ENCODE measurements at regions of chr10 and their contacts with region 1.

Region 1: DNA sequence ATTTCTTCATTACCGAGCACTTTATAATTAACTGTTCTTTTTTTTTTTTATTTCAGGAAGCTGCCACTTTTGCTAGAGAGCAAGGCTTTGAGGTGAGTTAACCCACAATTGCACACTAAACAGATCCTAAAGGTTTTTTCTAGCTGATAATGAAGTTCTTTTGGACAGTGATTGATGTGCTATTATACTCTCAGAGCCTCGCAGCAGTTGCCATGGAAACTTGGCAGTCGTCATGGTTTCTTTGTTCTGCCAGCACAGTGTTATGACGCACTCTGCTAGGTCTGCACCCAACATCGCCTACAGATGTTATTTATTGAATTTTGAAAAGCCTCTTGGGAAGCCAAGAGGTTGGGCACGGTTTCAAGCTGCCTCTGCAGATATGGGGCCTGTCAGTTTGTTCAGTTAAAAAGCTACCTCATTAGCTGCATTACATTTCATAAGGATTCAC is 237.2 kb upstream of the KAT6B start:
- DNase-seq: peak; percentile 82
- ATAC-seq: peak; percentile 75
- H3K4me3 ChIP-seq: no peak overlapping the region
- H3K27ac ChIP-seq: no peak overlapping the region
- H3K4me1 ChIP-seq: peaks cover 23% of the 10 kb centered on the region
- H3K27me3 ChIP-seq: no peaks in the 10 kb centered on the region
- CTCF ChIP-seq: no peak
- EP300 ChIP-seq: peak; percentile 80 to 92
- POLR2A ChIP-seq: no peak
- RAD21 ChIP-seq: no peak

Region 2: GRCh38 chr10:74437822-74438221 is 151.4 kb before region 1 on chr10:
- CTCF ChIA-PET with region 1: no interaction called
- POLR2A ChIA-PET with region 1: no interaction called
- RAD21 ChIA-PET with region 1: no interaction called
- SMC1A ChIA-PET with region 1: no interaction called
- in situ Hi-C with region 1: no loop called
- intact Hi-C with region 1: no loop called
- DNase-seq: no peak
- ATAC-seq: no peak
- H3K4me3 ChIP-seq: no peak overlapping the region
- H3K27ac ChIP-seq: no peak overlapping the region
- H3K4me1 ChIP-seq: no peaks in the 10 kb centered on the region
- H3K27me3 ChIP-seq: no peaks in the 10 kb centered on the region
- CTCF ChIP-seq: no peak
- EP300 ChIP-seq: no peak
- POLR2A ChIP-seq: no peak
- RAD21 ChIP-seq: no peak

Region 3: DNA sequence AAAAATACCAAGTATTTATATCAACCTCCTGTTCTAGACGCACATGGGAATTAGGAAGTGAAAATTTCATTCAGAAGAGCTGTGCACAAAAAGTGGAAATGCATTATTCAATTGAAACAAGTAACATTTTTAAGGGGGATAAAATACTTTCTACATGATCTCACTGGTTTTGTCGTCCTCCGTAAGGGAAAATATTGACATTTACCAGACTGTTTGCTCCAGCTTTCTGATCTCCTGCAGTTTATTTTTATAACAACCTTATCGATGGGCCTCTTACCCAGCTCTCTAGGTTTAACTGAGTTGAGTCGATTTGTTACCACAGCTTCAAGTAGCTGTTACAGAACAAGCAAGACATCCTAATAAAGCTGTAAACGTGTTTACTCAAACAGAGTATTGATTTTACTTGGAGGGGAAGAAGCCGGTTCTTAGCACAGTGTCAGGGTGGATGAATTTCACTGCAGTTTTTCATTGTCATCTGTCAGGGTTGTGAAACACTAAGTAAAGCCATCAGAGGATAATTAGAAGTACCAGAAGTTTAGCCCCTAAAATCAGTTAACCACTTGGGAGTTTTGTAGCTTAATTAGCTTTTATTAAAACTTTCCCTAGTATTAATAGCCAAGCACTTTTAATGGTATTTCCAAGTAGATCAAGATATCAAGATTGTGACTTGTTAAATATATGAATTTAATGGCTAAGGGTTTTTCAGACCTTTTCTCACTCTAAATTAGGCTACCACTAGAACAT is 94.5 kb after region 1 on chr10:
- CTCF ChIA-PET with region 1: interaction called, 6 read pairs
- POLR2A ChIA-PET with region 1: interaction called, 14 read pairs
- RAD21 ChIA-PET with region 1: interaction called, 53 read pairs
- SMC1A ChIA-PET with region 1: interaction called, 58 read pairs
- in situ Hi-C with region 1: no loop called
- intact Hi-C with region 1: loop called (anchors 5 kb)
- DNase-seq: no peak
- ATAC-seq: peak; percentile 72
- H3K4me3 ChIP-seq: no peak overlapping the region; the same call in 1 of the 2 replicates
- H3K27ac ChIP-seq: peak overlapping the region; percentile 83
- H3K4me1 ChIP-seq: peaks cover 23% of the 10 kb centered on the region
- H3K27me3 ChIP-seq: no peaks in the 10 kb centered on the region
- CTCF ChIP-seq: no peak
- EP300 ChIP-seq: 0 out of 4 replicates have a peak, but pooled peaks of 1 of the 2 experiments have one; percentile 41
- POLR2A ChIP-seq: no peak
- RAD21 ChIP-seq: no peak

Region 4: DNA sequence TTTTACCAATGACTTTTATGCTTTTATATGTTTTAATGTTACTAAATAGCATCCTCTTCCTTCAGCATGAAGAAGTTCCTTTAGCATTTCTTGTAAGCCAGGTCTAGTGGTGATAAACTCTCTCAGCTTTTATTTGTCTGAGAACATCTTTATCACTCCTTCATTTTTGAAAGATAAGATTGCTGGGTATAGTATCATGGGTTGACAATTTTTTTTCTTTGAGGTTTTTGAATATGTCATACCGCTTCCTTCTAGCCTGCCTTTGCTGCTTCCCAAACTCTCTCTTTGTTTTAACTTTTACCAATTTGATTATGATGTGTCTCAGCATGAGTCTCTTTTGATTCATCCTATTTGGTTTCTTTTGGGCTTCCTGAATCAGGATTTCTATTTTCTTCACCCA is 129.0 kb after region 1 on chr10:
- CTCF ChIA-PET with region 1: no interaction called
- POLR2A ChIA-PET with region 1: no interaction called
- RAD21 ChIA-PET with region 1: no interaction called
- SMC1A ChIA-PET with region 1: no interaction called
- in situ Hi-C with region 1: no loop called
- intact Hi-C with region 1: no loop called
- DNase-seq: no peak
- ATAC-seq: no peak
- H3K4me3 ChIP-seq: no peak overlapping the region
- H3K27ac ChIP-seq: no peak overlapping the region
- H3K4me1 ChIP-seq: no peaks in the 10 kb centered on the region
- H3K27me3 ChIP-seq: no peaks in the 10 kb centered on the region
- CTCF ChIP-seq: no peak
- EP300 ChIP-seq: no peak
- POLR2A ChIP-seq: no peak
- RAD21 ChIP-seq: no peak

Region 5: GRCh38 chr10:74924251-74924951 is 335.2 kb after region 1 on chr10:
- CTCF ChIA-PET with region 1: no interaction called
- POLR2A ChIA-PET with region 1: no interaction called
- RAD21 ChIA-PET with region 1: no interaction called
- SMC1A ChIA-PET with region 1: no interaction called
- in situ Hi-C with region 1: no loop called
- intact Hi-C with region 1: no loop called
- DNase-seq: no peak
- ATAC-seq: no peak
- H3K4me3 ChIP-seq: no peak overlapping the region
- H3K27ac ChIP-seq: no peak overlapping the region; the same call in 1 of the 2 replicates
- H3K4me1 ChIP-seq: no peaks in the 10 kb centered on the region
- H3K27me3 ChIP-seq: no peaks in the 10 kb centered on the region
- CTCF ChIP-seq: no peak
- EP300 ChIP-seq: no peak
- POLR2A ChIP-seq: no peak
- RAD21 ChIP-seq: no peak

Region 6: GRCh38 chr10:75202321-75203045 is 613.2 kb after region 1 on chr10:
- CTCF ChIA-PET with region 1: no interaction called
- POLR2A ChIA-PET with region 1: no interaction called
- RAD21 ChIA-PET with region 1: no interaction called
- SMC1A ChIA-PET with region 1: no interaction called
- in situ Hi-C with region 1: no loop called
- intact Hi-C with region 1: no loop called
- DNase-seq: no peak
- ATAC-seq: no peak
- H3K4me3 ChIP-seq: no peak overlapping the region
- H3K27ac ChIP-seq: no peak overlapping the region
- H3K4me1 ChIP-seq: no peaks in the 10 kb centered on the region
- H3K27me3 ChIP-seq: no peaks in the 10 kb centered on the region
- CTCF ChIP-seq: no peak
- EP300 ChIP-seq: no peak
- POLR2A ChIP-seq: no peak
- RAD21 ChIP-seq: no peak